ENCODE measurements at regions of chr11 and their contacts with region 1.

Region 1: DNA sequence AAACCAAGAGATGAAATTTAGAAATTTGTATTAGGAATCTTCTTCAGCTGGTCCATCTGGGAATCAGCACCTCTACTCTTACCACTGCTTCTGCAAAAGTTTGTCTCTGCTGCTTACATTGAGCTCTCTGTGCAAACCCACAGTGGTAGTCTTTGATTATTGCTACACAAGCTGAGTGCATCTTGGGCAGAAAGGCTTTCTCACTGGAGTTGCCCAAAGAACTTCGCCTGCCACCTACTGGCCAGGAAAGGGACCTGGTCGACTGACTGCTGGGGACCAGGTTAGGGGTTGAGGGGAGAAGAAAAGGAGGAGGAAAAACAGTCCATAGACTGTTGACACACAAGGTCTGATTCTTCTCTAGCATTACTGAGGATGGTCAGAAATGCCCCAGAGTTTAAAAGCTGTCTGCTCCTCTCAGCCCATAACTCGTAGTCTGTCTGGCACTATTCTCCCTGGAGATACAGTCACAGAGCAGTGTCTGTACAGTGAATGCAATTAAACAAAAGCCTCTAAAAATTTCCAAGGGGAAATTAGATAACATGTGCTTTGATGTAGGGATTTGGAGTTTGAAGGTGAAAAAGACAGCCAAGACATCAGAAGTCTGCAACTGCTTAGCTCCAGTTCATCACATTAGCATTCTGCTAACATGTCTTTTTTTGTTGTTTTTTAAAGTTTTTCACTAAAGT is 215.0 kb upstream of the CTSC start:
- DNase-seq: no peak
- H3K4me3 ChIP-seq: no peak overlapping the region
- H3K27ac ChIP-seq: no peak overlapping the region
- H3K4me1 ChIP-seq: peaks cover 30% of the 10 kb centered on the region
- H3K27me3 ChIP-seq: no peaks in the 10 kb centered on the region
- CTCF ChIP-seq: peak; percentile 60 to 63
- POLR2A ChIP-seq: no peak

Region 2: GRCh38 chr11:88402192-88402715 is 150.3 kb before region 1 on chr11:
- CTCF ChIA-PET with region 1: no interaction called
- POLR2A ChIA-PET with region 1: no interaction called
- dilution Hi-C with region 1: no loop called
- intact Hi-C with region 1: loop called (anchors 1 kb)
- DNase-seq: peak; percentile 93
- H3K4me3 ChIP-seq: peak overlapping the region in 1 of 3 experiments; percentile 43
- H3K27ac ChIP-seq: peak overlapping the region; percentile 95
- H3K4me1 ChIP-seq: peaks cover 50% of the 10 kb centered on the region
- H3K27me3 ChIP-seq: no peaks in the 10 kb centered on the region
- CTCF ChIP-seq: no peak
- POLR2A ChIP-seq: no peak

Region 3: DNA sequence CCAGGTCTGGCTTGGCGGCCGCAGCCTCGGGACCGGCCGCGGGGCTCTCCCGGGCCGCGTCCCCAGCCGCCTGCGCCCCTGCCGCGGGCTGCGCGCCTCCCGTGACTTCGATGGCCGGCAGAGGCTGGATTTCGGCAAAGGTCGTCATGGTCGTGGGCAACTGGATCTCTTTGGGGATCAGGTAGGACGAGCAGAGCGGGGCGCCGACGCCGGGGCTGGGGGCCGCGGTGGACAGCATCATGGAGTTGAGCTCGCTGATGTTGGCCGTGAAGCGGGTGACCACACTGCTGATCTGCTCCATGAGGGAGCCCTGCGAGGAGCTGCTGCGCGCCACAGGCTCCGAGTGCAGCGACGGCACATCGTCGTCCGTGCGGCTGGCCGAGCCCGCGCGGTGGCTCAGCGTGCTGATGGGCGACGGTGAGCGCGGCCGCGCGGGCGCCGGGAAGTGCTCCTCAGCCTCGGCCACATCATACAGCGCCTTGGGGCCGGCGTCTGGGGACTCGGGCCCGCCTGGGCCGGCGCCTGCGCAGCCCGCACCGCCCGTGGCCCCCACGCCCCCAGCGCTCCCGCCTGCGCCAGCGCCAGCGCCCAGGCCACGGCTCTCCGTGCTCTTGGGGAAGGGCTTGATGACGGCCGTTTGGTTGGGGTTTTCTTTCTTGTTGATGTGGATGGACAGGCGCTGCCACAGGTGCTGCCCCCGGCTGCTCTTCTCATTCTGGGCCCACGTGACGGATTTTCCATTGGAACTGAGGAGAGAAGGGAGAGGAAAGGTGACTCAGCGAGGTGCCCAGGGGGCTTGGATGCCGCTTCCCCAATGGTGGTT is 43.5 kb before region 1 on chr11:
- CTCF ChIA-PET with region 1: no interaction called
- POLR2A ChIA-PET with region 1: no interaction called
- dilution Hi-C with region 1: no loop called
- intact Hi-C with region 1: loop called (anchors 1 kb)
- DNase-seq: peak; percentile 57
- H3K4me3 ChIP-seq: peak overlapping the region in 2 of 3 experiments; percentile 6 to 47
- H3K27ac ChIP-seq: no peak overlapping the region
- H3K4me1 ChIP-seq: peaks cover 4% of the 10 kb centered on the region
- H3K27me3 ChIP-seq: no peaks in the 10 kb centered on the region
- CTCF ChIP-seq: no peak
- POLR2A ChIP-seq: no peak

Region 4: DNA sequence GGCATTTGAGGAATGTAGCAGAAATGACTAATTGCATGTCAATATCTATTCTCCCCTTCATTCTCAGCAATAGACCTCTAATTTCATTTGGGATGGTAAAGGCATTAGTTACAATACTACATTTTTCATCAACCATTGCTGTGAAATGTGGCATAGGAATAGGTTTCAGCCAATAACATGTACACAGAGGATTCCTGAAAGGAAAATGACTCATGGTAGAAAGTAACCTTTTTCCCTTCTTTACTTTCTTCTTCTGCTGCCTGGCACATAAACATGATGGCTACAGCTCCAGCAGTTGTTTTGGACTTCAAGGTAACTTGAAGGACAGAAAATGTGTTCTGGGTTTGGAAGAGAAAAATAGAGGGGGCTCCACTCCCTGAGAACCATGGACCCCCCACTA is 16.8 kb after region 1 on chr11:
- CTCF ChIA-PET with region 1: interaction called, 12 read pairs
- POLR2A ChIA-PET with region 1: no interaction called
- dilution Hi-C with region 1: no loop called
- intact Hi-C with region 1: no loop called
- DNase-seq: peak; percentile 82
- H3K4me3 ChIP-seq: no peak overlapping the region
- H3K27ac ChIP-seq: no peak overlapping the region
- H3K4me1 ChIP-seq: peaks cover 8% of the 10 kb centered on the region
- H3K27me3 ChIP-seq: no peaks in the 10 kb centered on the region
- CTCF ChIP-seq: no peak
- POLR2A ChIP-seq: no peak

Region 5: DNA sequence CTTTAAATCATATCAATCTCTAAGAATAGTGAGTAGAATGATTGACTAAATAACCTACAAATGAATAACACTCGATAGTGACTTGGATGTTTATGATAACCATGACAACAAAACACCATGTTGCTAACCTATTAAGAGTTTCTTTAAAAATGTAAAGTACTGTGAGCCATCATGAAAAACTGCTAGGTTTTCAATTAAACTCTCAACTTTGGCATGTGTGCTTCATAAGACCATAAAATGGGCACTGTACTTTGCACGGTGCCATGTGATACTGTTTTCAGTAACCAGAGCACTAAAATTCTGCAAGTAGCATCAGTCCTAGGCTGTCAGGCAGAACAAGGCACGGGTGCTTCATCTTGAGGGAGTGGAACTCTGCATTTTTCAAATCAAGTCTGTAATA is 1061.4 kb after region 1 on chr11:
- CTCF ChIA-PET with region 1: no interaction called
- POLR2A ChIA-PET with region 1: no interaction called
- dilution Hi-C with region 1: no loop called
- intact Hi-C with region 1: loop called (anchors 5 kb)
- DNase-seq: peak; percentile 20
- H3K4me3 ChIP-seq: no peak overlapping the region
- H3K27ac ChIP-seq: no peak overlapping the region
- H3K4me1 ChIP-seq: no peaks in the 10 kb centered on the region
- H3K27me3 ChIP-seq: no peaks in the 10 kb centered on the region
- CTCF ChIP-seq: no peak
- POLR2A ChIP-seq: no peak